Left ventricle myocardium inferior (tissue), 1 donor: ENCODE measurements at regions of chr3 and their contacts with region 1.

Region 1: GRCh38 chr3:192816351-192816750 is 89.0 kb upstream of the FGF12 start:
- DNase-seq: no peak
- H3K4me3 ChIP-seq: no peak overlapping the region
- H3K27ac ChIP-seq: no peak overlapping the region
- H3K4me1 ChIP-seq: peaks cover 22% of the 10 kb centered on the region
- H3K27me3 ChIP-seq: no peaks in the 10 kb centered on the region
- CTCF ChIP-seq: peak; percentile 78

Region 2: DNA sequence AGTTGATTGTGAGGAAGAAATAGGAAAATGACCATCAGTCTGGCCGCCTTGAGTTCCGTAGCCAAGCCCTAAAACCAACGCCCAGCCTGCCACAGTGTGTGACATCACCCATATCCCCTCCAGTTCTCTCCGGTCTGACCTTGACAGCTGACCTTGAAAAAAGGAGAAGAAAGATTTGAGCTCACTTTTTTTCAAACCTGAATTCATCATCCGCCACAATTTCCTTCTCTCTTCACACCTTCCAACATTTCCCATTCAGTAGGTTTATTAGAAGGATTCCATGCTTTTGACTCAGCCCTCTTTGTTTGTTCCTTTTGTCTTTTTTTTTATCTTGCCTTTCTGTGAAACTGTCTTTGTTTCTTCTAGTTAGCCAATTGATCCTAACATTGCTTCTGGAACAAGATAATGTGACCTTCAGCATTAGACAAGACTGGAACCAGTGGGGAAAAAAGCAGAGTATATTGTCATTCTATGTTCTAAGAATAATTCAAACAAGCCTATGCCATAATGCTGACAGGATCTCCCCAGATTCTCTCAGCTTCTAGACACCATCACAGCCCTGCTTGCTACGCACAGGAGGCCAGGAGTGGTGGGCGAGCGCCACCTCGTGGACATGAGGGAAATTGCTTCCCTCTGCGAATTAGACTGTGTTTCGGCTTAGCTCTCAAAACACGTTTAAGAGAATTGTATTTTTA is 372.1 kb before region 1 on chr3:
- intact Hi-C with region 1: no loop called
- DNase-seq: peak; percentile 43
- H3K4me3 ChIP-seq: no peak overlapping the region
- H3K27ac ChIP-seq: no peak overlapping the region
- H3K4me1 ChIP-seq: peaks cover 39% of the 10 kb centered on the region
- H3K27me3 ChIP-seq: no peaks in the 10 kb centered on the region
- CTCF ChIP-seq: peak; percentile 100

Region 3: DNA sequence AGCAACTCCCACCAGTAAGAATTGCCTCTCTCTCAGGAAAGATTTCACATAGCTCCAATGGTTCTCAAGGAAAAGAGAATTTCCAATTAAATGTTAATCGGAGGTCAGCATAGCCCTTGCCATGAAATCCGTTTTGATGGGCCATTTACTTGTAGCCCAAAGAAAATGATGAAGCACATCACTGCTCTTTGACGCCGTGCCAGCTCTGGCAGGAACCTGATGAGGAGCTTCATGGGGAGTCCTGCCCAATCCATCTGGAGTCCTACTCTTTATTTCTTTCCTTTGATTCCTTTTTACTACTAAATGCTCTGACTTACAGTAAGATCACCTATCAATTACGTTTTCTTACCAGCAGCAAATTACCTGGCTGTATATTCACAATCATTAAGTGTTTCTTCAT is 173.7 kb before region 1 on chr3:
- intact Hi-C with region 1: no loop called
- DNase-seq: peak; percentile 33
- H3K4me3 ChIP-seq: no peak overlapping the region
- H3K27ac ChIP-seq: peak overlapping the region; percentile 57
- H3K4me1 ChIP-seq: peaks cover 26% of the 10 kb centered on the region
- H3K27me3 ChIP-seq: no peaks in the 10 kb centered on the region
- CTCF ChIP-seq: no peak

Region 4: DNA sequence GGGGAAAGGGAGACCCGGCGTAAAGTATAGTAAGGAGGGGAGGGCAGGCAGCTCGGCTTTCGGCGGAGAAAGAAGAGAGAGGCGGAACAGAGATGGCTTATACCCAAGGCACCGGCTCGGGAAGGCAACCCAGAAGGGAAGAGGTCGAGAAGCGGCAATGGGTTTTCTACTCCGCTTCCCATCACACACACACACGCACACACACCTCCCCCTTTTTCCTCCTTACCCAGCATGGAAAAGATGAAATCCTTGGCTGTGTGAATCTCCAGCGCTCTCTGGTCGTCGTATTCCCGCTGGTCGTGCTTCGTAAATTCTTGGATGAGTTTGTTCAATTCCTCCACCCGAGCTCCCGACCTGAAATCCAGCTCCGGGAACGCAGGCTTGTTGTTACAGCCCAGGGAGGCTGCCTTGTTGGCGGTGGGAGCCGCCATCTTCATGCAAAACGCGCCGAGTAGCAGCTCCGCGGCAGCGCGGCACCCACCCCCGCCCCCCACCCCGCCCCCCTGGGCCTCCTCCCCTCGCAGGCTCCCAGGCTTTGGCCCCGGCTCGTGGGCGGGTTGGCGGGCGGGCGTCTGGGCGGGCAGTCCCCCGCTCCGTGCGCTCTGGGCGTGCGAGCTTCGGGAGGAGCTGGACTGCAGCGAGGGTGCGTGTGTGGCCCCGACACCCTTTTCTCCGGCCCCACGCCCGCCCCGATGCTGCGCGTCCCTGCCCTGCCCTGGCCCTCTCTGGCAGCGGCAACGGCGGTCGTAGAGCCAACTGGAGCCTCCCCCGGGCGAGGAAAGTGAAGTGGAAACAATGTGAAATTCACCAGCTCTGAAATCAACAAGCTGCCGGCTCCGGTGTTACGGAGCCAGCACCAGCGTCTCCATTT is 101.3 kb after region 1 on chr3 and contains the start of gene MB21D2:
- intact Hi-C with region 1: loop called (anchors 5 kb)
- DNase-seq: peak; percentile 82
- H3K4me3 ChIP-seq: peak within 1 kb of the TSS; percentile 78
- H3K27ac ChIP-seq: peak within 1 kb of the TSS; percentile 94
- H3K4me1 ChIP-seq: peaks cover 61% of the 10 kb centered on the region
- H3K27me3 ChIP-seq: no peaks in the 10 kb centered on the region
- CTCF ChIP-seq: peak; percentile 49
- total RNA-seq, gene MB21D2: 1.8 TPM

Region 5: GRCh38 chr3:193040836-193041672 is 224.7 kb after region 1 on chr3:
- intact Hi-C with region 1: loop called (anchors 2 kb)
- DNase-seq: no peak
- H3K4me3 ChIP-seq: no peak overlapping the region
- H3K27ac ChIP-seq: no peak overlapping the region
- H3K4me1 ChIP-seq: no peaks in the 10 kb centered on the region
- H3K27me3 ChIP-seq: no peaks in the 10 kb centered on the region
- CTCF ChIP-seq: peak; percentile 68